CD4-positive, alpha-beta T cell (primary cell): ENCODE measurements at regions of chr12 and their contacts with region 1.

Region 1: DNA sequence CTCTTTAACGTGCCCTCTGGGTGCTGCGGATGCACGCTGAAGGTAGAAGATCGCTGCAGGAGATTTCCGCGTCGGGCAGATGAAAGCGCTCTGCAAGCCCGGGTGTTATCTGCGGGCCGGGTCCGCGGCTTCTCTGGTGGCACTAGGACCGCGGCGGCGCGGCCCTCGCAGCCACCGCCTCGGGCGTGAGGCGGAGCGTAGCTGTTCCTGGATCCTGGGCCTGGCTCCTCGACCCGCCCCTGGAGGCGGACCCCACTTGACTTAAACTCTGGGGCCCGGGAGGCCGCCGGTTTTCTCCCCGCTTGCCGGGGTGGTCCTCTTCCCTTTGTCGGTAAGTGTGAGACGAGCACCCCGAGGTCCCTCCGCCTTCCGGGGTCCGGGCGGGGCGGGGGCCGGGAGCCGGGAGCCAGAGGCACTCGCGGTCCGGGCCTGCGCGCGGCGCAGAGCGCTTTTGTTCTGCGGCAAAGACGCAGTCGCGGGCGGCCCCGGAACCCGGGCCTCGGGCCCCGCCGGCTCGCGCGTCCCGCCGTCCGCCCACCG is at the start of gene RESF1:
- DNase-seq: peak; percentile 72 to 96 (median 85)
- ATAC-seq: peak; percentile 73
- H3K4me3 ChIP-seq: peak within 1 kb of the TSS; percentile 84
- H3K4me3 Mint-ChIP-seq: peak within 1 kb of the TSS; percentile 99
- H3K27ac ChIP-seq: peak within 1 kb of the TSS; percentile 69 to 82
- H3K27ac Mint-ChIP-seq: peak within 1 kb of the TSS; percentile 96
- H3K4me1 ChIP-seq: peaks cover 46% of the 10 kb centered on the region
- H3K4me1 Mint-ChIP-seq: peaks cover 78% of the 10 kb centered on the region
- H3K27me3 ChIP-seq: no peaks in the 10 kb centered on the region
- H3K27me3 Mint-ChIP-seq: no peaks in the 10 kb centered on the region
- CTCF ChIP-seq: no peak
- total RNA-seq, gene RESF1: 113 to 124 TPM

Region 2: DNA sequence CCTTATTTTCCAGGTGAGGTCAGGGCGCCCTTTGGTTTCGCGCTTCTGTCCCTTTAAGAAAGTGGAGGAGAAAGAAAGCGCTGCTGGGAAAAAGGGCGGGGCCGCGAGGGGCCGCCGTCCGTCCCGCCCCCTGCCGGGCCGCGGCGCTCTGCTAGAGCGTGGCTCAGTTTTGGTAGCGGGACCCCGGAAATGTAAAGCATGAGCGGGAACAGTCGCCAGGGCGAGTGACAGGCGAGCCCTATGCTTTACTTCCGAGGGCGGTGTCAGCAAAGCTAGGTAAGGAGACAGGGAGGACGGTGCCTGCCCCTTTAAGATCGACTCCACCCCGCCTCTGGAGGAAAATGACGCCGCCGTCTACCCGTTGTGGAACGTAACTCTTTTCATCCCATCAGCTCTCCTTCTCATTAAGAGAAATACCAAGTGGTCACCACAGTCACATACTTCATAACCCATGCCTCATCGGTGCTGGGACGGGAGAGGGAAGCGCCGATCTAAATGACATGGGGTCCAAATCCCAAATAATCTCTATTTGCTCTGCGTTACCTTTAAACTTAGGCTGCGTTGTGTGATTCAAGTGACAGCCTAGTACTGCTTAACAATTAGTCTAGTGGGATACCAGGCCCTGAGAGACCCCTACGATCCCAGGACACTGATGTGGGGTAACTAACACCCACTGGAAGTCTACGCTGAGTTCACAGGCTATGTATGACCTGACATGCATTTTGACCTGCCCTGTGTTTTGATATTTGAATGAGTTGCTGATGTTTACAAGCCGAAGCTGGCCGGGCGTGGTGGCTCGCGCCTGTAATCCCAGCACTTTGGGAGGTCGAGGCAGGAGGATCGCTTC is 299.9 kb before region 1 on chr12 and contains the start of gene ETFBKMT:
- CTCF ChIA-PET with region 1: interaction called, 5 read pairs
- POLR2A ChIA-PET with region 1: interaction called, 52 read pairs
- intact Hi-C with region 1: loop called (anchors 1 to 2 kb)
- DNase-seq: peak; percentile 83 to 97 (median 90)
- ATAC-seq: peak; percentile 97
- H3K4me3 ChIP-seq: peak within 1 kb of the TSS; percentile 68
- H3K4me3 Mint-ChIP-seq: peak within 1 kb of the TSS; percentile 99
- H3K27ac ChIP-seq: peak within 1 kb of the TSS; percentile 68 to 91
- H3K27ac Mint-ChIP-seq: peak within 1 kb of the TSS; percentile 97
- H3K4me1 ChIP-seq: peaks cover 12% of the 10 kb centered on the region
- H3K4me1 Mint-ChIP-seq: peaks cover 19% of the 10 kb centered on the region
- H3K27me3 ChIP-seq: no peaks in the 10 kb centered on the region
- H3K27me3 Mint-ChIP-seq: no peaks in the 10 kb centered on the region
- CTCF ChIP-seq: no peak
- total RNA-seq, gene ETFBKMT: 0.38 to 0.92 TPM

Region 3: DNA sequence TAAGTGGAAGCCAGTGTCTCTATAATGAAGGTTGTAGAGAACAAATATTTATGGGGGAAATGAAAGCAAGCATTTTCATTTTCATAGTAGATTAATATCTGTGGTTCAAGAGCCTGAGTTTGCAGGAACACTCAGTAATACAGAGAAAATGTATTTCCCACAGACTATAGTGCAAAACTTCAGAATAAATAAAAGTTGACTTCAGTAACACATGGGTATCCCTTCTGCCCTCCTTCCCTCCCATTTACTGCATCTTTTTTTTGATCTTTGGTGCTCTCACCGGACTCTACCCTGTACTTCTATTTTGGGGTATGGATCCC is 155.1 kb before region 1 on chr12:
- CTCF ChIA-PET with region 1: no interaction called
- POLR2A ChIA-PET with region 1: interaction called, 8 read pairs
- intact Hi-C with region 1: loop called in 1 of 2 experiments (anchors 10 kb)
- DNase-seq: peak in 1 of 14 experiments; percentile 10
- ATAC-seq: no peak
- H3K4me3 ChIP-seq: peak overlapping the region; percentile 19
- H3K4me3 Mint-ChIP-seq: peak overlapping the region; percentile 85
- H3K27ac ChIP-seq: no peak overlapping the region
- H3K27ac Mint-ChIP-seq: peak overlapping the region; percentile 75
- H3K4me1 ChIP-seq: peaks cover 30% of the 10 kb centered on the region
- H3K4me1 Mint-ChIP-seq: peaks cover 61% of the 10 kb centered on the region
- H3K27me3 ChIP-seq: no peaks in the 10 kb centered on the region
- H3K27me3 Mint-ChIP-seq: no peaks in the 10 kb centered on the region
- CTCF ChIP-seq: no peak

Region 4: GRCh38 chr12:31896514-31897039 is 62.7 kb before region 1 on chr12:
- CTCF ChIA-PET with region 1: interaction called, 6 read pairs
- POLR2A ChIA-PET with region 1: interaction called, 99 read pairs
- intact Hi-C with region 1: loop called (anchors 1 to 5 kb)
- DNase-seq: peak; percentile 63 to 97 (median 78)
- ATAC-seq: peak; percentile 96
- H3K4me3 ChIP-seq: no peak overlapping the region
- H3K4me3 Mint-ChIP-seq: peak overlapping the region; percentile 74
- H3K27ac ChIP-seq: peak overlapping the region; percentile 71 to 82
- H3K27ac Mint-ChIP-seq: peak overlapping the region; percentile 93
- H3K4me1 ChIP-seq: peaks cover 69% of the 10 kb centered on the region
- H3K4me1 Mint-ChIP-seq: peaks cover 47% of the 10 kb centered on the region
- H3K27me3 ChIP-seq: no peaks in the 10 kb centered on the region
- H3K27me3 Mint-ChIP-seq: no peaks in the 10 kb centered on the region
- CTCF ChIP-seq: no peak

Region 5: DNA sequence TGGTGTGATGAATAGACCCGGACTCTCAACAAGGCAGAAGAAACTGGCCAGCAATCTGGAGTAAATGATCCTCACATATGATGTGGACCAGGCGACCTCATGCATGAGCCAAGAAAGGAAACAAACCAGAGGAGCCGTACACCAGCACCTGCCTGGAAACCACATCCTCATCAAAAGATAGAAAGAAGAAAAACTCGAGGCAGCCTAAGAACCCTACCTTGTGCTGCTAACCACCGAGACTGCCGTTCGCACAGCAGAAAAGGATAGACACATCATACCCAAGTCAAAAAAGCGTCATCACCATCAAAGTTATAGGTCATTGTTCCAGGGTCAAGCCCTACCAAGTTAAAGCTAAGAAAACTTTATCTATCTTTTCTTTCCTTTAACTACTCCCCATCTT is 66.7 kb after region 1 on chr12:
- CTCF ChIA-PET with region 1: no interaction called
- POLR2A ChIA-PET with region 1: interaction called, 13 read pairs
- intact Hi-C with region 1: loop called in 1 of 2 experiments (anchors 5 kb)
- DNase-seq: peak; percentile 15 to 80 (median 36)
- ATAC-seq: peak; percentile 97
- H3K4me3 ChIP-seq: no peak overlapping the region
- H3K4me3 Mint-ChIP-seq: peak overlapping the region; percentile 21
- H3K27ac ChIP-seq: no peak overlapping the region
- H3K27ac Mint-ChIP-seq: peak overlapping the region; percentile 69
- H3K4me1 ChIP-seq: peaks cover 15% of the 10 kb centered on the region
- H3K4me1 Mint-ChIP-seq: peaks cover 43% of the 10 kb centered on the region
- H3K27me3 ChIP-seq: no peaks in the 10 kb centered on the region
- H3K27me3 Mint-ChIP-seq: no peaks in the 10 kb centered on the region
- CTCF ChIP-seq: no peak

Region 6: GRCh38 chr12:32312049-32312670 is 352.9 kb after region 1 on chr12:
- CTCF ChIA-PET with region 1: no interaction called
- POLR2A ChIA-PET with region 1: no interaction called
- intact Hi-C with region 1: loop called (anchors 5 to 10 kb)
- DNase-seq: peak in 4 of 14 experiments; percentile 4 to 69 (median 64)
- ATAC-seq: peak; percentile 55
- H3K4me3 ChIP-seq: no peak overlapping the region
- H3K4me3 Mint-ChIP-seq: no peak overlapping the region
- H3K27ac ChIP-seq: no peak overlapping the region
- H3K27ac Mint-ChIP-seq: no peak overlapping the region
- H3K4me1 ChIP-seq: no peaks in the 10 kb centered on the region
- H3K4me1 Mint-ChIP-seq: peaks cover 6% of the 10 kb centered on the region
- H3K27me3 ChIP-seq: no peaks in the 10 kb centered on the region
- H3K27me3 Mint-ChIP-seq: no peaks in the 10 kb centered on the region
- CTCF ChIP-seq: peak; percentile 78